ENCODE measurements at regions of chr6 and their contacts with region 1.

Region 1: GRCh38 chr6:47097092-47097945 is 55.2 kb upstream of the ADGRF1 start:
- DNase-seq: peak; percentile 87
- H3K4me3 Mint-ChIP-seq: no peak overlapping the region
- H3K27ac Mint-ChIP-seq: no peak overlapping the region
- H3K4me1 Mint-ChIP-seq: peaks cover 18% of the 10 kb centered on the region
- H3K27me3 Mint-ChIP-seq: no peaks in the 10 kb centered on the region
- CTCF ChIP-seq: peak; percentile 77

Region 2: DNA sequence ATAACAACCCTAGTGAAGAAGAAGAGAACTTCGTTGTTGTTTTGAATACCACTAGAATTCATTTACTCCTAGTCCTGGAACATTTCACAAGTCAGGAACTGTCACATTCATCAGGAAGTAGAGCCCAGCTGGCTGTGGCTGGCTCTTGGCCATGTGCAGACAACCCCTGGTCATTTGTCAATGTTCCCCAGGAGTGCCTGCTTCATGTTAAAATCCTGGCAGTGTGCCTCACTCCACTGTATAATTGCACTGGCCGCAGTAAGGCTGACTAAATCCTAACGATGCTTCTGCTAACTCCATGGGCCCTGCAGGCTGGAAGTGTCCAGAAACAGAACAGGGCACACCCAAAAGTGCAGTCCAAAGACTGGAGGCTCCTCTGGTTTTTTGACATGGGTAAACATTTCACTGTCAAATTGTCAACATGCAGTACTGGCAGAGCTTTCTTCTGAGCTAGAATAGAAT is 13.7 kb before region 1 on chr6:
- CTCF ChIA-PET with region 1: interaction called, 17 read pairs
- POLR2A ChIA-PET with region 1: interaction called, 8 read pairs
- intact Hi-C with region 1: no loop called
- DNase-seq: peak; percentile 91
- H3K4me3 Mint-ChIP-seq: peak overlapping the region; percentile 20
- H3K27ac Mint-ChIP-seq: peak overlapping the region; percentile 40
- H3K4me1 Mint-ChIP-seq: peaks cover 19% of the 10 kb centered on the region
- H3K27me3 Mint-ChIP-seq: no peaks in the 10 kb centered on the region
- CTCF ChIP-seq: no peak

Region 3: GRCh38 chr6:47134476-47135189 is 37.3 kb after region 1 on chr6:
- CTCF ChIA-PET with region 1: interaction called, 3 read pairs
- POLR2A ChIA-PET with region 1: interaction called, 5 read pairs
- intact Hi-C with region 1: loop called (anchors 5 kb)
- DNase-seq: peak; percentile 95
- H3K4me3 Mint-ChIP-seq: peak overlapping the region; percentile 35
- H3K27ac Mint-ChIP-seq: peak overlapping the region; percentile 80
- H3K4me1 Mint-ChIP-seq: peaks cover 34% of the 10 kb centered on the region
- H3K27me3 Mint-ChIP-seq: no peaks in the 10 kb centered on the region
- CTCF ChIP-seq: no peak

Region 4: DNA sequence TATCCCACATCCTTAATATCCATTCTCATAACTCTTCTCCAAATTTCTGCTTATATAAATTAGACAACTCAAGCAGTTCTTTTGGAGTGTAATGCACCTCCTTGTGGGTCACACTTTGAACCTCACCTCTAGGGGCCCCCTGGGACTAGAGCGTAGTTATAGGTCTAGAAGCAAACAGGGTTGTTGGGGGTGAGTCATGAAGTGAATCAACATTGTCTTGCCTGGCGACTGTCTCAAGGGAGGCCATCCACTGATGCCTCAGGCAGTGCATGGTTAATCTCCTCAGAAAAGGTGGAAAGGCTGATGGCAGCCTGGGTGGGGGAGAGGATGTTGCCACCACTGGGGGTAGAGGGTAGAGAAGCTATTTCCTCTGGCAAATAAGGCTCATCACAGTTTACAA is 83.3 kb after region 1 on chr6:
- CTCF ChIA-PET with region 1: interaction called, 5 read pairs
- POLR2A ChIA-PET with region 1: interaction called, 3 read pairs
- intact Hi-C with region 1: loop called (anchors 5 kb)
- DNase-seq: peak; percentile 89
- H3K4me3 Mint-ChIP-seq: no peak overlapping the region
- H3K27ac Mint-ChIP-seq: peak overlapping the region; percentile 76
- H3K4me1 Mint-ChIP-seq: peaks cover 9% of the 10 kb centered on the region
- H3K27me3 Mint-ChIP-seq: no peaks in the 10 kb centered on the region
- CTCF ChIP-seq: no peak

Region 5: DNA sequence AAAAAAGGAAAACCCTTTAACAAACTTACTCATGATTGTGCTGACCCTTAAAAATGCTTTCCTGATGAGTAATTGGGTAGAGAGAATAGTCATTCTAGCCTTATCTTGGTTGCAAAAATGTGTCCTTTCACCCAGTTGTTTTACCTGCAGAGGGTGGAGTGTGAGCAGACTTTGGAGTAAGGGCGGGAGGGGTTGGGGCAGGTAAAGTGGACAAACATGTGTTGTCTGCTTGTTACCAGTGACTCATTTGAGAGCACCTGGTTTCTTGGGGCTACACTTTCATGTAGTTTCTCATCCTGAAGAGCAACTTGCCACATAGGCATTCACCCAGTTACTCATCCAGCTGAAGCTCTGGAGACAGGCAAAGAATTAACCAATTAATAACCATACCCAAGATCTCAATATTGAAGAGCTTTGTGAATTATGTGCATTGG is 91.3 kb after region 1 on chr6:
- CTCF ChIA-PET with region 1: interaction called, 6 read pairs
- POLR2A ChIA-PET with region 1: interaction called, 22 read pairs
- intact Hi-C with region 1: loop called (anchors 5 kb)
- DNase-seq: peak; percentile 90
- H3K4me3 Mint-ChIP-seq: peak overlapping the region; percentile 26
- H3K27ac Mint-ChIP-seq: peak overlapping the region; percentile 61
- H3K4me1 Mint-ChIP-seq: peaks cover 15% of the 10 kb centered on the region
- H3K27me3 Mint-ChIP-seq: no peaks in the 10 kb centered on the region
- CTCF ChIP-seq: no peak

Region 6: GRCh38 chr6:47242483-47243386 is 145.4 kb after region 1 on chr6:
- CTCF ChIA-PET with region 1: interaction called, 52 read pairs
- POLR2A ChIA-PET with region 1: interaction called, 43 read pairs
- intact Hi-C with region 1: loop called (anchors 1 kb)
- DNase-seq: peak; percentile 94
- H3K4me3 Mint-ChIP-seq: peak overlapping the region; percentile 65
- H3K27ac Mint-ChIP-seq: peak overlapping the region; percentile 77
- H3K4me1 Mint-ChIP-seq: peaks cover 36% of the 10 kb centered on the region
- H3K27me3 Mint-ChIP-seq: no peaks in the 10 kb centered on the region
- CTCF ChIP-seq: no peak

Region 7: DNA sequence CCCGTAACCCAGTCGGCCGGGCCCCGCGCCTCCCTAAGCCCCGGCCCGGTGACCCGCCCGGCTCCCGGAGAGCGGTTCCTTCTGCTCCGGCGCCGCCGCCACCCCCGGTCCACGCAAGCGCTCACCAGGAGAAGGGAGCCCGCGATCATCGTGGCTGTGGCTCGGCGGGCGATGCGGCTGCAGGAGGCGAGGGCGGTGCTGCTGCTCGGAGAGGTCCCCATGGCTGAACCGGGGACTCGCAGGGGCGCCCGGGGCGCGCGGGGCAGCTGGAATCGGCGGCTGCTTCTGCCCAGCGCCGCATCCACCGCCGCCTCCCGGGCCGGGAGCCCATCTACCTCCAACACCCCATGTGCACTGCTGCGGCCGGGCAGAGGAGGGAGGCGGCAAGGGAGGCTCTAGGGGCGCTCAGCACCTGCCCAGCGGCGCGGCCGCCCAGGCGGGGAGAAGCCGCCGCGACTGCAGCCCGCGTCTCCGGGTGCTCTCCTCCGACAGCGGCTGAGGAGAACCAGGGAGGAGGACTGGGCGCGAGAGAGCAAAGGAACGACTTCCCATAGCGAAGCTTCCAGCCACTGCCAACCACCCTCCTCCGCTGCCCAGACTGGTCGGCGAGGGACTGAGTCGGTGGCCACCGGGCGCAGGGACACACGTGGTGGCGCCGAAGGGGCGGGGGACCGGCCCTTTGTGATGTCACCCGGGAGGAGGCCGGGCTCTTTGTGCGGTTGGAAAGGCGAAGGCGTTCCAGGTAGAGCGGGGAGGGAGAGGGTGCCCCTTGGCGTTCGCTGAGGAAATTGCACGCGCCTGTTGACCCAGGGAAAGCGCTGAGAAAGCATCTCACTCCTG is 212.2 kb after region 1 on chr6 and contains the start of gene TNFRSF21:
- CTCF ChIA-PET with region 1: interaction called, 136 read pairs
- POLR2A ChIA-PET with region 1: interaction called, 68 read pairs
- intact Hi-C with region 1: loop called (anchors 1 kb)
- DNase-seq: peak; percentile 91
- H3K4me3 Mint-ChIP-seq: peak within 1 kb of the TSS; percentile 89
- H3K27ac Mint-ChIP-seq: peak within 1 kb of the TSS; percentile 77
- H3K4me1 Mint-ChIP-seq: peaks cover 12% of the 10 kb centered on the region
- H3K27me3 Mint-ChIP-seq: no peaks in the 10 kb centered on the region
- CTCF ChIP-seq: peak; percentile 90
- total RNA-seq, gene TNFRSF21: 17.8 and 19.3 TPM in 2 replicates

Measured in MCF 10A (cell line).